Activated naive CD4-positive, alpha-beta T cell treated with anti-CD3 and anti-CD28 coated beads, Interleukin-2, amount 10 ng/mL, durations not matched to agents 7 days and 5 days (primary cell): ENCODE measurements at regions of chr7 and their contacts with region 1.

Region 1: GRCh38 chr7:44980393-44981034 is 1.7 kb upstream of the MYO1G start:
- DNase-seq: peak; percentile 59
- H3K4me3 Mint-ChIP-seq: peak overlapping the region; percentile 90
- H3K27ac Mint-ChIP-seq: peak overlapping the region; percentile 92
- H3K4me1 Mint-ChIP-seq: peaks cover 83% of the 10 kb centered on the region
- H3K27me3 Mint-ChIP-seq: no peaks in the 10 kb centered on the region

Region 2: GRCh38 chr7:44999245-45000095 is 19.0 kb after region 1 on chr7:
- CTCF ChIA-PET with region 1: interaction called, 16 read pairs
- DNase-seq: peak; percentile 100
- H3K4me3 Mint-ChIP-seq: peak overlapping the region; percentile 92
- H3K27ac Mint-ChIP-seq: peak overlapping the region; percentile 94
- H3K4me1 Mint-ChIP-seq: peaks cover 61% of the 10 kb centered on the region
- H3K27me3 Mint-ChIP-seq: no peaks in the 10 kb centered on the region

Region 3: GRCh38 chr7:45026984-45027773 is 46.7 kb after region 1 on chr7:
- CTCF ChIA-PET with region 1: interaction called, 51 read pairs
- DNase-seq: peak; percentile 54
- H3K4me3 Mint-ChIP-seq: peak overlapping the region; percentile 82
- H3K27ac Mint-ChIP-seq: peak overlapping the region; percentile 95
- H3K4me1 Mint-ChIP-seq: peaks cover 63% of the 10 kb centered on the region
- H3K27me3 Mint-ChIP-seq: no peaks in the 10 kb centered on the region